MCF 10A (cell line): ENCODE measurements at regions of chr4 and their contacts with region 1.

Region 1: GRCh38 chr4:54064295-54065111 is at the start of gene CHIC2:
- DNase-seq: peak; percentile 88
- H3K4me3 Mint-ChIP-seq: peak within 1 kb of the TSS; percentile 89
- H3K27ac Mint-ChIP-seq: peak within 1 kb of the TSS; percentile 97
- H3K4me1 Mint-ChIP-seq: peaks cover 44% of the 10 kb centered on the region
- H3K27me3 Mint-ChIP-seq: no peaks in the 10 kb centered on the region
- CTCF ChIP-seq: no peak
- total RNA-seq, gene CHIC2: 59.4 and 59.6 TPM in 2 replicates

Region 2: GRCh38 chr4:53943345-53944085 is 121.0 kb before region 1 on chr4:
- CTCF ChIA-PET with region 1: interaction called, 4 read pairs
- POLR2A ChIA-PET with region 1: interaction called, 18 read pairs
- intact Hi-C with region 1: no loop called
- DNase-seq: peak; percentile 95
- H3K4me3 Mint-ChIP-seq: no peak overlapping the region
- H3K27ac Mint-ChIP-seq: peak overlapping the region; percentile 57
- H3K4me1 Mint-ChIP-seq: peaks cover 15% of the 10 kb centered on the region
- H3K27me3 Mint-ChIP-seq: no peaks in the 10 kb centered on the region
- CTCF ChIP-seq: no peak

Region 3: DNA sequence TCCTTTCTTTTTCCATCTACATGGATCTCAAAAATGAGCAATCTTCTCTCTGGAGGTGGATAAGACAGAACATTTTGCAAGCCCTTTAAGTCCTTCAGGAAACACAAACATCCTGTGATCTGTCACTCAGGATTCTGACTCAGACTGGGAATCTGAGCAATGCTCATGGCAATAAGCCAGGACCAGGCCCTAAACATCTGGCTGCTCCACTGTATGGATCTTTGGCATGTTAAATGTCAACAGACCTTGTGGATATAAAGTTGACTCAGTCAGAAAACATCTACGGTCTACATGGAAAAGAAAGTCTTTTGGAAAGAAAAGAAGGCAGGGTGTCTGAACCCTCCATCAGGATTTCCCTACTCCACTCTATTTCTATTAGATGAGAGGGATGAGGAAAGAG is 17.7 kb after region 1 on chr4:
- CTCF ChIA-PET with region 1: interaction called, 3 read pairs
- POLR2A ChIA-PET with region 1: interaction called, 14 read pairs
- intact Hi-C with region 1: loop called (anchors 1 kb)
- DNase-seq: peak; percentile 99
- H3K4me3 Mint-ChIP-seq: peak overlapping the region; percentile 5
- H3K27ac Mint-ChIP-seq: peak overlapping the region; percentile 61
- H3K4me1 Mint-ChIP-seq: peaks cover 36% of the 10 kb centered on the region
- H3K27me3 Mint-ChIP-seq: no peaks in the 10 kb centered on the region
- CTCF ChIP-seq: no peak

Region 4: DNA sequence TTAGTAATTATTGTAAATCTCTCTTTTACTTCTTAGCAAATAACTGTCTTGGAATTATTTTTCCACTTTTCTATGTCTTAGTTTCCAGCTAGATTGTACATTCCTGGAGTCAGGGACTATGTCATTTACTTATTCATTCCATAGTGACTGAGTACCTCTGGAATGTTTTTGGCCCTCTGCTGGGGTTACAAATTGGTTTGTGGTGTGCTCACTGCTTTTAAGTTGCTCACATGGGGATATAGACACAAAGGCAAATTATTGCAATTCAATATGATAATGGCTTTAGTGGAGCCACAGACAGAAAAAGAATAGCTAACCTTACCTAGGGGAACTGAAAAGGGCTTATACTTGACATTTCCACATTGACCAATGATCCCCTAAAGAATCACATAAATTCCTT is 100.9 kb after region 1 on chr4:
- CTCF ChIA-PET with region 1: interaction called, 4 read pairs
- POLR2A ChIA-PET with region 1: interaction called, 3 read pairs
- intact Hi-C with region 1: loop called (anchors 2 kb)
- DNase-seq: peak; percentile 65
- H3K4me3 Mint-ChIP-seq: no peak overlapping the region
- H3K27ac Mint-ChIP-seq: peak overlapping the region; percentile 2
- H3K4me1 Mint-ChIP-seq: peaks cover 13% of the 10 kb centered on the region
- H3K27me3 Mint-ChIP-seq: no peaks in the 10 kb centered on the region
- CTCF ChIP-seq: no peak